Mammary epithelial cell (primary cell): ENCODE measurements at regions of chr4 and their contacts with region 1.

Region 1: GRCh38 chr4:156968479-156968984 is 3.1 kb downstream of the PDGFC start:
- DNase-seq: peak; percentile 72
- H3K4me3 ChIP-seq: peak overlapping the region; percentile 60 to 90 (median 77)
- H3K27ac ChIP-seq: no peak overlapping the region
- H3K4me1 ChIP-seq: peaks cover 30% of the 10 kb centered on the region
- H3K27me3 ChIP-seq: no peaks in the 10 kb centered on the region
- CTCF ChIP-seq: peak; percentile 78 to 81

Region 2: GRCh38 chr4:156594624-156595023 is 373.9 kb before region 1 on chr4:
- CTCF ChIA-PET with region 1: no interaction called
- dilution Hi-C with region 1: no loop called
- in situ Hi-C with region 1: no loop called
- intact Hi-C with region 1: loop called (anchors 1 kb)
- DNase-seq: peak; percentile 24
- H3K4me3 ChIP-seq: no peak overlapping the region
- H3K27ac ChIP-seq: no peak overlapping the region
- H3K4me1 ChIP-seq: peaks cover 6% of the 10 kb centered on the region
- H3K27me3 ChIP-seq: no peaks in the 10 kb centered on the region
- CTCF ChIP-seq: no peak

Region 3: GRCh38 chr4:156771171-156771837 is 197.2 kb before region 1 on chr4:
- CTCF ChIA-PET with region 1: interaction called, 15 read pairs
- dilution Hi-C with region 1: loop called (anchors 25 kb)
- in situ Hi-C with region 1: no loop called
- intact Hi-C with region 1: loop called (anchors 1 kb)
- DNase-seq: peak; percentile 99
- H3K4me3 ChIP-seq: peak overlapping the region; percentile 13 to 36 (median 18)
- H3K27ac ChIP-seq: peak overlapping the region; percentile 93
- H3K4me1 ChIP-seq: peaks cover 45% of the 10 kb centered on the region
- H3K27me3 ChIP-seq: no peaks in the 10 kb centered on the region
- CTCF ChIP-seq: no peak

Region 4: GRCh38 chr4:156889616-156890594 is 78.6 kb before region 1 on chr4:
- CTCF ChIA-PET with region 1: no interaction called
- dilution Hi-C with region 1: no loop called
- in situ Hi-C with region 1: no loop called
- intact Hi-C with region 1: loop called (anchors 2 kb)
- DNase-seq: peak; percentile 72
- H3K4me3 ChIP-seq: peak overlapping the region in 1 of 3 experiments; percentile 22
- H3K27ac ChIP-seq: peak overlapping the region; percentile 56
- H3K4me1 ChIP-seq: peaks cover 20% of the 10 kb centered on the region
- H3K27me3 ChIP-seq: no peaks in the 10 kb centered on the region
- CTCF ChIP-seq: no peak

Region 5: DNA sequence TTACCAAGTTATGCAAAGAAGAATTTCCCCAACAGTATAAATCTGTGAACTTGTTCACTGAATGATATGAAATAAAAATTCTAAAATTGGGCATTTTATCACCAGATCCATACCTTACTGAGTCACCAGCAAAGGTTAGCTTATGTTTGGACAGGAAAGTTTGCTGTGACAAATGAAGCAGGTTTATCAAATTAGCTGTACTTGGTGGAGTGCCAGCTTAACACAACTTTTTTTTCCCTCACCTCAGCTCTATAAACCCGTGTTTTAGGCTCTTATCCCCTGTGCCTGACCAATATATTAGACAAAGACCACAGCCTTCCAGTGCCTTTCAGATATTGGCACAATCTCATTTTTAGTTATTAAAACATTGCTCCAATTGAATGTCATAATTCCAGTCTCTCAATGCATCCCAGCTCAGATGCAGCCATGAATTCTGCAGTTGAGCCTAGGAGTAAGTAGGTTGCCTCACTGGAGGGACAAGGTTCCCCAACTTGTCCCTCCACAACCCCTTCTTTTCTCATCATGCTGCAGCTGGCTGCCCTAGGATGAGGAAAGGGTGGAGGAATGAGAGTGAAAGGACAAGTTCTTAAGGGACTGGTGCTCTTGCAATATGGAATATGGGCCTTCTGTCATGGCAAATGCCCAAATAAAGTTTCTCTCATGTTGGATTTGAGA is 30.1 kb after region 1 on chr4:
- CTCF ChIA-PET with region 1: no interaction called
- dilution Hi-C with region 1: no loop called
- in situ Hi-C with region 1: no loop called
- intact Hi-C with region 1: no loop called
- DNase-seq: peak; percentile 14
- H3K4me3 ChIP-seq: no peak overlapping the region
- H3K27ac ChIP-seq: peak overlapping the region; percentile 30
- H3K4me1 ChIP-seq: peaks cover 26% of the 10 kb centered on the region
- H3K27me3 ChIP-seq: no peaks in the 10 kb centered on the region
- CTCF ChIP-seq: no peak

Region 6: DNA sequence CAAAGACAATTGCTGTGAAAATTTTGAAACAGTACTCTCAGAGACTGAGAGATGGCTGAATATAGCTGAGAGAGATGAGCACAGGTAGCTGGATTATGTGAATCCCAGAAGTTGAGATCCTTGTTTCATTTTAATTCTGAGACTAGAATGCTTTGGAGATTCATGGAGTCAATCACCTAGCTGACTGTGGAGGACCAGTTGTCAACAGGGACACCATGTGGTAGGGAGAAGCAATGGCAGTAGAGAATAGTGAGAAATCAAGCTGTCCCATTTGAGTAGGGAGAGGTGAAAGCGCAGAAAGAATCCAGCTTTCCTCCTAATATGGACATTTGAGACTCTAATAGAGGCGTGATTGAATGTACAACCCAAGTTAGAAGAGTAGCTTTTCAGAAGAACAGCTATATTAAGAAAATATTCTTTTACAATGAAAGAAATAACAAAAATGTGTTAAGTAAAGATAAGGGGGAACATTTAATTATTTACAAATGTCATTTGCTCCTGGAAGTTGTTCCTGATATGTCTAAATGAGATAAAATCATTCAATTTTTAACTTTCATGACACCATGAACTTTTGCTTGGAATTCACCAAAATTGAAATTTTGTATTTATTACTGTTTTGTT is 77.1 kb after region 1 on chr4:
- CTCF ChIA-PET with region 1: interaction called, 3 read pairs
- dilution Hi-C with region 1: no loop called
- in situ Hi-C with region 1: no loop called
- intact Hi-C with region 1: loop called (anchors 1 kb)
- DNase-seq: peak; percentile 66
- H3K4me3 ChIP-seq: no peak overlapping the region
- H3K27ac ChIP-seq: no peak overlapping the region
- H3K4me1 ChIP-seq: peaks cover 3% of the 10 kb centered on the region
- H3K27me3 ChIP-seq: no peaks in the 10 kb centered on the region
- CTCF ChIP-seq: peak; percentile 93

Region 7: GRCh38 chr4:157172011-157172410 is 203.5 kb after region 1 on chr4:
- CTCF ChIA-PET with region 1: interaction called, 4 read pairs
- dilution Hi-C with region 1: no loop called
- in situ Hi-C with region 1: no loop called
- intact Hi-C with region 1: loop called (anchors 5 kb)
- DNase-seq: no peak
- H3K4me3 ChIP-seq: no peak overlapping the region
- H3K27ac ChIP-seq: no peak overlapping the region
- H3K4me1 ChIP-seq: no peaks in the 10 kb centered on the region
- H3K27me3 ChIP-seq: no peaks in the 10 kb centered on the region
- CTCF ChIP-seq: peak; percentile 19 to 42

Region 8: DNA sequence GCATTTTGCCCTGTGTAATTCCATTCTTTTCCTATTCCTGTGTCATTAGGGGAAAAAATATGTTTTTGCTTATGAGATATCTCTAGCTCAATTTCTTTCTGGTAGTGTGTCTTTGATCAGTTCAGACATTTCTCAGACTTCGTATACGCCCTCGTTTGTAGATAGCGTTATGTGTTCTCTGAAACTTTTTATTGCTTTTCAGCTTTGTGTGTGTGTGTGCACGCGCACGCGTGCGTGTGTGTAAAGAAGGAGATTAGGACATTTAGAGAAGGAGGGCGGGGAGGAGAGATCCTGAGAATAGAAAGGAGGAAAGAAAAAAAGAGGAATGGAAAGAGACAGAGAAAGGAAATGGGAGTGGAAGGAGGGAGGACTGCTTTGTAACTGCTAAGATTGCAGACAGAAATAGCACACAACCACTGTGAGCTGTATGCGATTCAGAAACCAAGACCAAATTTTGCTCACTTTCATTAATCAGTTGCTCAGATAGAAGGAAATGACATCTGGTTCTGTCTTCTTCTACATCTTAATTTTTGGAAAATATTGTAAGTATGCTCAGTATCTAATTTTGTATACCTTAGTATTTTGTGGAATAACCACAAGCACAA is 1553.1 kb after region 1 on chr4 and contains the start of gene RXFP1:
- CTCF ChIA-PET with region 1: no interaction called
- dilution Hi-C with region 1: no loop called
- in situ Hi-C with region 1: no loop called
- intact Hi-C with region 1: no loop called
- DNase-seq: no peak
- H3K4me3 ChIP-seq: no peak within 1 kb of the TSS
- H3K27ac ChIP-seq: no peak within 1 kb of the TSS
- H3K4me1 ChIP-seq: peaks cover 11% of the 10 kb centered on the region
- H3K27me3 ChIP-seq: no peaks in the 10 kb centered on the region
- CTCF ChIP-seq: no peak
- total RNA-seq, gene RXFP1: not detected